ENCODE measurements at regions of chr17 and their contacts with region 1.

Region 1: DNA sequence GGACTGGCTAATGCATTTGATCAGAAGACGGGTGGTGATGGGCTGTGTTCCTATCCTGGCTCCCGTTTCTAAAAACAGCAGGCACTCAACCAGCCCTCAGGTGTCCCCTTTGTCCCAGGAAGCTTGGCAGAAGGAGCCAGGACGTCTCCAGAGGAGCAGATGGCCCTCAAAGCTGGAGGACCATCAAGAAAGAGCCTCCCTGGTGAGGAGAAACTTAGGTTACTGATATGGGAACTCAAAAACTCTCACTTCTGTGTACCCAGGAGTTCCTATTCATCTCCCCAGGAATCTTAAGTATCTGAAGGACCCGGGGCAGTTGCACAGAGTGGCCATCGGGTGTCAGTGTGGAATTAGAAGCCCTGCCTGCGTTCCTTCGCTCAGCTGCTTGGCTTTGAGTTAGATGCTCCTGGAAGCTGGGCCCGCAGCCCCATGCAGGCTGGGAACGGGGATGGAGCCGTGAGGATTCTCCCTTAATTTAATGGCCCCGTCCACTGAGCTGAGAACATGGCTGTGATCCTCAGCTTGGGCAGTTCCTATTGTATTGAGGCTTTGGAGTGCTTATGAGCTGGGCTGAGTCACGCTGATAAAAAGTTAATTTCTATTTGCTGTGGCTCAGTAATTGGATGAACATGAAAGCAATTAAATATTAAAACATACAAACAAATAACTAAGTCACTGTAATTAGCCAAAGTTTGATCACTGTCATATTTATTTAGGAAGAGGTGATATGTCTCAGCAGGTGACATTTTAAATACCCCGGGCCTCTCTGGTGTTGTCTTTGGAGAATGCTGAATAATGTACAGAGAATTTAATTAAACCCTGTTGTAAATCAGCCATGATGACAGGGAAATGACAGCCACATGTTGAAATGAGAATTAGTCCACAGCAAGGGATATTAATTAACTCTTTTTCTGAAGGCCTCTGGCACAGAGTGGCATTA is 402.1 kb downstream of the SEC14L1 start:
- DNase-seq: peak; percentile 60
- ATAC-seq: peak; percentile 89
- H3K4me3 ChIP-seq: no peak overlapping the region
- H3K27ac ChIP-seq: no peak overlapping the region
- H3K4me1 ChIP-seq: no peaks in the 10 kb centered on the region
- H3K27me3 ChIP-seq: peaks cover 19 to 81% of the 10 kb centered on the region in 2 experiments; a peak in 4 of 5 replicates
- CTCF ChIP-seq: peak; percentile 90
- EP300 ChIP-seq: no peak
- POLR2A ChIP-seq: no peak
- RAD21 ChIP-seq: peak; percentile 86

Region 2: GRCh38 chr17:76791053-76791980 is 751.5 kb before region 1 on chr17:
- CTCF ChIA-PET with region 1: no interaction called
- POLR2A ChIA-PET with region 1: no interaction called
- in situ Hi-C with region 1: no loop called
- intact Hi-C with region 1: no loop called
- DNase-seq: peak; percentile 39
- ATAC-seq: no peak
- H3K4me3 ChIP-seq: no peak overlapping the region
- H3K27ac ChIP-seq: no peak overlapping the region
- H3K4me1 ChIP-seq: peaks cover 32% of the 10 kb centered on the region
- H3K27me3 ChIP-seq: no peaks in the 10 kb centered on the region
- CTCF ChIP-seq: no peak
- EP300 ChIP-seq: no peak
- POLR2A ChIP-seq: no peak
- RAD21 ChIP-seq: no peak

Region 3: GRCh38 chr17:77516902-77517301 is 25.9 kb before region 1 on chr17:
- CTCF ChIA-PET with region 1: no interaction called
- POLR2A ChIA-PET with region 1: no interaction called
- in situ Hi-C with region 1: no loop called
- intact Hi-C with region 1: no loop called
- DNase-seq: no peak
- ATAC-seq: no peak
- H3K4me3 ChIP-seq: no peak overlapping the region
- H3K27ac ChIP-seq: no peak overlapping the region
- H3K4me1 ChIP-seq: peaks cover 32% of the 10 kb centered on the region
- H3K27me3 ChIP-seq: peaks cover 3 to 21% of the 10 kb centered on the region in 2 experiments; a peak in 3 of 5 replicates
- CTCF ChIP-seq: no peak
- EP300 ChIP-seq: no peak
- POLR2A ChIP-seq: no peak
- RAD21 ChIP-seq: no peak

Region 4: GRCh38 chr17:77779711-77780539 is 237.1 kb after region 1 on chr17:
- CTCF ChIA-PET with region 1: no interaction called
- POLR2A ChIA-PET with region 1: no interaction called
- in situ Hi-C with region 1: no loop called
- intact Hi-C with region 1: loop called (anchors 5 kb)
- DNase-seq: no peak
- ATAC-seq: no peak; the same call in 1 of the 3 replicates
- H3K4me3 ChIP-seq: no peak overlapping the region
- H3K27ac ChIP-seq: no peak overlapping the region
- H3K4me1 ChIP-seq: no peaks in the 10 kb centered on the region
- H3K27me3 ChIP-seq: peaks cover 12 to 67% of the 10 kb centered on the region in 2 experiments; a peak in 4 of 5 replicates
- CTCF ChIP-seq: no peak
- EP300 ChIP-seq: no peak
- POLR2A ChIP-seq: no peak
- RAD21 ChIP-seq: no peak

Region 5: DNA sequence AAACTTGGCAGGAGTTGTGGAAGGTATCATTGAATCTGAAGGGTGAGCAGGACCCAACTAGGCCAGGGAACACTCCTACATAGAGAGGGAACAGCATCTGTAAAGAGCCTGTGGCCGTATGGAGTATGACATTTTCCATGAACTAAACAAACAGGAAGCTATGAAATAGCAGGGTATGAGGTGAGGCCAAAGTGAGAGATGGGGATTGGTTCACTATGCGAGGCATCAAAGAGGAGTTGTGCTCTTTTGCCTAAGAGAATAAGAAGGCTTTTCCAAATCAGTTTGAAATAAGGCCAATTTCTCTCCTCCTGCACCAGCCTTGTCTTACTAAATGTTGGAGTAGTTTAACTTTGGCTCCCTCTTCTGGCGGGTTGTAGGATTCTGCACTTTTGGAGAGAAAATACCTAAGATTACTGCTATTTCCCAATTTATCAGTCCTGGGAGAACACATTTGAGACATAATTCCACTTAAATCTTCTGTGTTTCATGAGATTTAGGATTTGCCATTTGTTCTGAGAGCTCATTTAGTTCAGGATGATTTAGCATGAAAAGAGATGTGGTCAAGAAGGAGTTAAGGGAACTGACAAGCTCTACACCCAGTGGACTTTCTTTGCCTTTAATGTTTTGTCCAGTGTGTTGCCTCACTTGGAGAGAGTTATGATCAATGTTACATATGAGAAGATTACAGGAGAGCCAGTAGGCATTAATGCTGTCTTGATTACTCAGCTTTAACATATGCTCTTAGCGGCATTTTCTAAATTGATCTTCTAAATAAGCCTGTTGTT is 471.1 kb after region 1 on chr17:
- CTCF ChIA-PET with region 1: interaction called, 3 read pairs
- POLR2A ChIA-PET with region 1: no interaction called
- in situ Hi-C with region 1: no loop called
- intact Hi-C with region 1: loop called (anchors 10 kb)
- DNase-seq: peak; percentile 45
- ATAC-seq: peak; percentile 75
- H3K4me3 ChIP-seq: no peak overlapping the region
- H3K27ac ChIP-seq: no peak overlapping the region
- H3K4me1 ChIP-seq: no peaks in the 10 kb centered on the region
- H3K27me3 ChIP-seq: no peaks in the 10 kb centered on the region
- CTCF ChIP-seq: peak; percentile 58
- EP300 ChIP-seq: no peak
- POLR2A ChIP-seq: no peak
- RAD21 ChIP-seq: 0 out of 2 replicates have a peak, but pooled peaks have one; percentile 19